MCF 10A (cell line): ENCODE measurements at regions of chr1 and their contacts with region 1.

Region 1: GRCh38 chr1:205950280-205950679 is 7.0 kb upstream of the SLC26A9 start:
- DNase-seq: peak; percentile 98
- H3K4me3 Mint-ChIP-seq: peak overlapping the region; percentile 7
- H3K27ac Mint-ChIP-seq: peak overlapping the region; percentile 1
- H3K4me1 Mint-ChIP-seq: peaks cover 69% of the 10 kb centered on the region
- H3K27me3 Mint-ChIP-seq: peaks cover 68% of the 10 kb centered on the region
- CTCF ChIP-seq: no peak

Region 2: DNA sequence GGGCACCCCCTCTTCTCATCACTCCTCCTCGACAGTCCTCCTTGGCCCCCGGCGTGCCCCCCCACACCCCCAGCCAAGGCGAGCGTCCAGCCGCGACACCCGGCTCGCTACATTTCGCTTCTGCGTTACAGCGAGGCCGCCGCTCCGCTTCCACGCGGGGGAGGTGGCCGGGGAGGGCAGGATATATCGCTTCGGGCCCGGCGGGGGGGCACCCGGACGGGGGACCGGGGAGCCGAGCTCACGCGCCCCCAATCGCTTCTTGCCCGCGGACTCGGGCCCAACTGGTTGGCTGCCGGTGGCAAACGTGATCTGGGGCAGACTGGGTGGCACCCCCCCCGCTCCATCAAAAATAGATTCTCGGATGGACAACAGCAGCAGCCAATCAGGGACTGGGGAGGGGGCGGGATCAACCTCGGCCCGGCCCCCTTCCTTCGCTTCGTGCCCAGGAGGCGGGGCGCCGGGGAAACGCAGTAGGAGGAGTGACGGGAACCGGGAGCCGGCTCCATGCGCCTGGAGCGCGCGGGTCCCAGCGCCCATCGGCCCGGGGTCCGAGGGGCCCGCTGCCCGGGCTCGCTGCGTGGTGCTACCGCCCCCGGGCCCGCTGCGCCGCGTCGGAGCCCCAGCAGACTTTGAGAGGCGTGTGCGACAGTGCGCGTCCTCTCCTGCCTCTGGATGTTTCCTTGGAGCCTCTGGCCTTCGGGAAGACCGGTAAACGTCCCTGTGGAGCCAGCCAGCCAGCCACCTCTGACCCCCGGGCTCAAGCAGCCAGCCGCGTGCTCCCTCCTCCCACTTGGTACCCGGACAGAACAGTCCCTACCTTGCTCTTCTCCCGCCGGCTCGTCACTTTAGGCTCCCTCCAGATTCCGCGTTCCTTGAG is 137.2 kb before region 1 on chr1 and contains the start of gene SLC41A1:
- CTCF ChIA-PET with region 1: no interaction called
- POLR2A ChIA-PET with region 1: interaction called, 14 read pairs
- intact Hi-C with region 1: no loop called
- DNase-seq: peak; percentile 98
- H3K4me3 Mint-ChIP-seq: peak within 1 kb of the TSS; percentile 87
- H3K27ac Mint-ChIP-seq: peak within 1 kb of the TSS; percentile 40
- H3K4me1 Mint-ChIP-seq: peaks cover 42% of the 10 kb centered on the region
- H3K27me3 Mint-ChIP-seq: no peaks in the 10 kb centered on the region
- CTCF ChIP-seq: no peak
- total RNA-seq, gene SLC41A1: 48.8 and 49.7 TPM in 2 replicates

Region 3: DNA sequence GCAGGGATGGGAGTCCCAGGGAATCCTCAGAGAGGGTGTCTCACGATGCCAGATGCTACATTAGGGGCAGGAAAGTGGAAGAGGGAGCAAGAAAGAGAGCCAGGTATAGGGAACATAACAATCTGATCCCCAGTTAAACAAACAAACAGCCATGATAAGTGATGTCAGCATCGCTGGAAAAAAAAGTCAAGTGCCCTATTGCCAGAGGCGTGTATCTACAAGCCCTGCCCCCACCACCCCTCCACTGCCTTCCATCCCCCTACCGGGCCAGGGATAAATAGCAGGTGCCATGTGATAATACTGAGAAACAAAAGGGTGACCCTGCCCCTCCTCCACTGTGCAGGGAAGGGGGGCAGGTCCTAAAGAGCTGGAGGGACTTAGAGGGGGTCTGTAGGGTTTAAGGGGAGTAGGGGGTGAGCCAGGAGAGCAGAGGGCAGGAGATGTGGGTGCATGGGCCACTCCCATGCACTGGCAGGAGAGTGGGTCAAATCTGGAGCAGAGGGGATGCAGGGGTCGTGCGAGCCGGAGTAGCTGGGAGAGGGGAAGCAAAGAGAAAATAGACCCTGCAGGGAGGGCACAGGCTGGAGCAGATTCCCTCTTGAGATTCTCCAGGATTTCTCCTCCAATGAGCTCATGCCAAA is 10.5 kb before region 1 on chr1:
- CTCF ChIA-PET with region 1: interaction called, 3 read pairs
- POLR2A ChIA-PET with region 1: interaction called, 11 read pairs
- intact Hi-C with region 1: loop called (anchors 1 kb)
- DNase-seq: peak; percentile 65
- H3K4me3 Mint-ChIP-seq: no peak overlapping the region
- H3K27ac Mint-ChIP-seq: no peak overlapping the region
- H3K4me1 Mint-ChIP-seq: peaks cover 29% of the 10 kb centered on the region
- H3K27me3 Mint-ChIP-seq: peaks cover 88% of the 10 kb centered on the region
- CTCF ChIP-seq: no peak

Region 4: GRCh38 chr1:205961405-205961804 is 11.1 kb after region 1 on chr1:
- CTCF ChIA-PET with region 1: interaction called, 23 read pairs
- POLR2A ChIA-PET with region 1: interaction called, 88 read pairs
- intact Hi-C with region 1: loop called (anchors 1 kb)
- DNase-seq: peak; percentile 73
- H3K4me3 Mint-ChIP-seq: no peak overlapping the region
- H3K27ac Mint-ChIP-seq: peak overlapping the region; percentile 20
- H3K4me1 Mint-ChIP-seq: peaks cover 34% of the 10 kb centered on the region
- H3K27me3 Mint-ChIP-seq: peaks cover 47% of the 10 kb centered on the region
- CTCF ChIP-seq: no peak

Region 5: DNA sequence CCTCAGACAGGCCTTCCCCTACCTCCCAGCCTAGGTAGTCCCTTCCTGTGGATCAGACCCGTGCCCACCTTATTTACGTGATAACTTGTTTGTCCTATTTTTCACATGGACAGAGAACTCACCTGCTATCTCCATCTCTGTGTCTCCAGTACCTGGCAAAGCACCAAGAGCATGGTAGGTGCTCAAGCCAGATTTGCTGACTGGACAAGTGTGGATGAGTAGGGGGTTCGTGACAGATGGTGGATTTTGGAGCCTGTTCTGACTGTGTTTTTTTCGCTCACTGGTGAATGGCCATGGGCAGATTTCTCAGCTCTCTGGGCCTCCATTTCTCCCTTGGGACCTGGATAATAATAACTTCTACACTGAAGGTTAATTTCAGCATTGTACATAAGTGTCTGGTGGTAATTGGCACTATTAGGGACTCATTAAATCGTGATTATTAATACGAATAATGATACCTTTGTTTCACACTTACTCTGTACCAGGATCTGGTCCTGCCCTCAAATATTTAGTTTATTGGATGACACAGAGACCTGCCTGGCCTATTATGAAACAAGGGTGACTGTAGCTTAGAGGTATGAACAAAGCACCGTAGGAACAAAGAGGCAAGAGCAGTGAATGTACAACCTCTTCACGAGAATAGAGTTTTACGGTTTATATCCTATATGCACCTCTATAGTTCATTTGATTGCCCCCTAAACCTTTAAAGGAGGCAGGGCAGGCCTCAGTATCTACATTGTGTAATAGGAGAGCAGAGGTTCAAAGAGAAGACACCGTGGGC is 17.5 kb after region 1 on chr1:
- CTCF ChIA-PET with region 1: interaction called, 23 read pairs
- POLR2A ChIA-PET with region 1: interaction called, 88 read pairs
- intact Hi-C with region 1: loop called (anchors 1 kb)
- DNase-seq: peak; percentile 67
- H3K4me3 Mint-ChIP-seq: no peak overlapping the region
- H3K27ac Mint-ChIP-seq: no peak overlapping the region
- H3K4me1 Mint-ChIP-seq: peaks cover 29% of the 10 kb centered on the region
- H3K27me3 Mint-ChIP-seq: peaks cover 5% of the 10 kb centered on the region
- CTCF ChIP-seq: no peak

Region 6: GRCh38 chr1:205992218-205992882 is 42.1 kb after region 1 on chr1:
- CTCF ChIA-PET with region 1: no interaction called
- POLR2A ChIA-PET with region 1: no interaction called
- intact Hi-C with region 1: no loop called
- DNase-seq: no peak
- H3K4me3 Mint-ChIP-seq: no peak overlapping the region
- H3K27ac Mint-ChIP-seq: no peak overlapping the region
- H3K4me1 Mint-ChIP-seq: peaks cover 8% of the 10 kb centered on the region
- H3K27me3 Mint-ChIP-seq: no peaks in the 10 kb centered on the region
- CTCF ChIP-seq: no peak